CD8-positive, alpha-beta memory T cell (primary cell): ENCODE measurements at regions of chr11 and their contacts with region 1.

Region 1: GRCh38 chr11:35391922-35392813 is 27.2 kb downstream of the SLC1A2 start:
- DNase-seq: peak; percentile 64 to 83 (median 77)
- H3K4me3 ChIP-seq: no peak overlapping the region
- H3K4me3 Mint-ChIP-seq: peak overlapping the region in 4 of 7 donors; percentile 22 to 51 (median 30)
- H3K27ac ChIP-seq: no peak overlapping the region
- H3K27ac Mint-ChIP-seq: peak overlapping the region in 3 of 8 donors; percentile 5 to 39 (median 37)
- H3K4me1 ChIP-seq: peaks cover 16% of the 10 kb centered on the region
- H3K4me1 Mint-ChIP-seq: peaks cover 9 to 24% (median 15%) of the 10 kb centered on the region in 3 donors
- H3K27me3 ChIP-seq: no peaks in the 10 kb centered on the region
- H3K27me3 Mint-ChIP-seq: peaks cover 4 to 7% of the 10 kb centered on the region in 2 donors

Region 2: GRCh38 chr11:34585735-34586487 is 806.3 kb before region 1 on chr11:
- CTCF ChIA-PET with region 1: interaction called, 26 read pairs
- POLR2A ChIA-PET with region 1: no interaction called
- DNase-seq: peak in 2 of 5 donors; percentile 23 to 25
- H3K4me3 ChIP-seq: no peak overlapping the region
- H3K4me3 Mint-ChIP-seq: no peak overlapping the region
- H3K27ac ChIP-seq: no peak overlapping the region
- H3K27ac Mint-ChIP-seq: no peak overlapping the region
- H3K4me1 ChIP-seq: no peaks in the 10 kb centered on the region
- H3K4me1 Mint-ChIP-seq: no peaks in the 10 kb centered on the region
- H3K27me3 ChIP-seq: no peaks in the 10 kb centered on the region
- H3K27me3 Mint-ChIP-seq: peaks cover 13 to 33% of the 10 kb centered on the region in 2 donors

Region 3: GRCh38 chr11:34926101-34926830 is 465.9 kb before region 1 on chr11:
- CTCF ChIA-PET with region 1: interaction called, 75 read pairs
- POLR2A ChIA-PET with region 1: no interaction called
- DNase-seq: peak in 2 of 5 donors; percentile 36 to 45
- H3K4me3 ChIP-seq: no peak overlapping the region
- H3K4me3 Mint-ChIP-seq: peak overlapping the region in 1 of 7 donors; percentile 15
- H3K27ac ChIP-seq: no peak overlapping the region
- H3K27ac Mint-ChIP-seq: peak overlapping the region in 2 of 8 donors; percentile 0 to 41
- H3K4me1 ChIP-seq: peaks cover 3% of the 10 kb centered on the region
- H3K4me1 Mint-ChIP-seq: peaks cover 13 to 29% (median 24%) of the 10 kb centered on the region in 3 donors
- H3K27me3 ChIP-seq: no peaks in the 10 kb centered on the region
- H3K27me3 Mint-ChIP-seq: no peaks in the 10 kb centered on the region

Region 4: GRCh38 chr11:35380586-35380985 is 11.6 kb before region 1 on chr11:
- CTCF ChIA-PET with region 1: interaction called, 11 read pairs
- POLR2A ChIA-PET with region 1: no interaction called
- DNase-seq: no peak
- H3K4me3 ChIP-seq: no peak overlapping the region
- H3K4me3 Mint-ChIP-seq: no peak overlapping the region
- H3K27ac ChIP-seq: no peak overlapping the region
- H3K27ac Mint-ChIP-seq: no peak overlapping the region
- H3K4me1 ChIP-seq: no peaks in the 10 kb centered on the region
- H3K4me1 Mint-ChIP-seq: no peaks in the 10 kb centered on the region
- H3K27me3 ChIP-seq: no peaks in the 10 kb centered on the region
- H3K27me3 Mint-ChIP-seq: no peaks in the 10 kb centered on the region